Activated B cell treated with CpG ODN at 0.5 μM for 24 hours (primary cell): ENCODE measurements at regions of chr1 and their contacts with region 1.

Region 1: GRCh38 chr1:100351095-100351891 is 1.0 kb upstream of the CDC14A start:
- DNase-seq: peak; percentile 78
- ATAC-seq: peak; percentile 66
- H3K4me3 Mint-ChIP-seq: peak overlapping the region; percentile 99
- H3K27ac Mint-ChIP-seq: peak overlapping the region; percentile 96
- H3K4me1 Mint-ChIP-seq: peaks cover 35% of the 10 kb centered on the region
- H3K27me3 Mint-ChIP-seq: no peaks in the 10 kb centered on the region
- CTCF ChIP-seq: no peak

Region 2: GRCh38 chr1:99969729-99970621 is 381.3 kb before region 1 on chr1 and contains the start of gene SLC35A3:
- CTCF ChIA-PET with region 1: no interaction called
- POLR2A ChIA-PET with region 1: interaction called, 6 read pairs
- intact Hi-C with region 1: loop called (anchors 5 kb)
- DNase-seq: peak; percentile 73
- ATAC-seq: peak; percentile 83
- H3K4me3 Mint-ChIP-seq: peak within 1 kb of the TSS; percentile 100
- H3K27ac Mint-ChIP-seq: peak within 1 kb of the TSS; percentile 95
- H3K4me1 Mint-ChIP-seq: peaks cover 27% of the 10 kb centered on the region
- H3K27me3 Mint-ChIP-seq: no peaks in the 10 kb centered on the region
- CTCF ChIP-seq: no peak
- total RNA-seq, gene SLC35A3: 18.3 and 21.1 TPM in 2 replicates

Region 3: GRCh38 chr1:100249537-100250257 is 101.6 kb before region 1 on chr1 and contains the start of gene DBT:
- CTCF ChIA-PET with region 1: interaction called, 3 read pairs
- POLR2A ChIA-PET with region 1: interaction called, 15 read pairs
- intact Hi-C with region 1: loop called (anchors 1 kb)
- DNase-seq: peak; percentile 77
- ATAC-seq: peak; percentile 100
- H3K4me3 Mint-ChIP-seq: no peak within 1 kb of the TSS
- H3K27ac Mint-ChIP-seq: no peak within 1 kb of the TSS
- H3K4me1 Mint-ChIP-seq: peaks cover 7% of the 10 kb centered on the region
- H3K27me3 Mint-ChIP-seq: no peaks in the 10 kb centered on the region
- CTCF ChIP-seq: no peak
- total RNA-seq, gene DBT: 9.8 and 11.6 TPM in 2 replicates

Region 4: GRCh38 chr1:100423832-100424337 is 72.6 kb after region 1 on chr1:
- CTCF ChIA-PET with region 1: interaction called, 6 read pairs
- POLR2A ChIA-PET with region 1: interaction called, 5 read pairs
- intact Hi-C with region 1: loop called (anchors 5 kb)
- DNase-seq: no peak
- ATAC-seq: peak; percentile 75
- H3K4me3 Mint-ChIP-seq: peak overlapping the region; percentile 29
- H3K27ac Mint-ChIP-seq: peak overlapping the region; percentile 76
- H3K4me1 Mint-ChIP-seq: peaks cover 34% of the 10 kb centered on the region
- H3K27me3 Mint-ChIP-seq: no peaks in the 10 kb centered on the region
- CTCF ChIP-seq: no peak